Activated B cell treated with CpG ODN at 0.5 μM for 24 hours (primary cell): ENCODE measurements at regions of chr9 and their contacts with region 1.

Region 1: GRCh38 chr9:79883073-79883645 is 311.4 kb downstream of the TLE4 start:
- DNase-seq: peak; percentile 42
- ATAC-seq: peak; percentile 69
- H3K4me3 Mint-ChIP-seq: peak overlapping the region; percentile 72
- H3K27ac Mint-ChIP-seq: peak overlapping the region; percentile 69
- H3K4me1 Mint-ChIP-seq: peaks cover 75% of the 10 kb centered on the region
- H3K27me3 Mint-ChIP-seq: no peaks in the 10 kb centered on the region
- CTCF ChIP-seq: no peak

Region 2: GRCh38 chr9:79757881-79758669 is 125.1 kb before region 1 on chr9:
- CTCF ChIA-PET with region 1: no interaction called
- POLR2A ChIA-PET with region 1: no interaction called
- intact Hi-C with region 1: loop called (anchors 2 kb)
- DNase-seq: no peak
- ATAC-seq: no peak
- H3K4me3 Mint-ChIP-seq: no peak overlapping the region
- H3K27ac Mint-ChIP-seq: no peak overlapping the region
- H3K4me1 Mint-ChIP-seq: no peaks in the 10 kb centered on the region
- H3K27me3 Mint-ChIP-seq: no peaks in the 10 kb centered on the region
- CTCF ChIP-seq: no peak

Region 3: GRCh38 chr9:79895232-79895631 is 12.1 kb after region 1 on chr9:
- CTCF ChIA-PET with region 1: no interaction called
- POLR2A ChIA-PET with region 1: no interaction called
- intact Hi-C with region 1: loop called (anchors 1 kb)
- DNase-seq: no peak
- ATAC-seq: no peak
- H3K4me3 Mint-ChIP-seq: no peak overlapping the region
- H3K27ac Mint-ChIP-seq: no peak overlapping the region
- H3K4me1 Mint-ChIP-seq: no peaks in the 10 kb centered on the region
- H3K27me3 Mint-ChIP-seq: no peaks in the 10 kb centered on the region
- CTCF ChIP-seq: no peak

Region 4: GRCh38 chr9:80074439-80074838 is 191.3 kb after region 1 on chr9:
- CTCF ChIA-PET with region 1: no interaction called
- POLR2A ChIA-PET with region 1: interaction called, 8 read pairs
- intact Hi-C with region 1: loop called (anchors 5 kb)
- DNase-seq: no peak
- ATAC-seq: no peak
- H3K4me3 Mint-ChIP-seq: no peak overlapping the region
- H3K27ac Mint-ChIP-seq: no peak overlapping the region
- H3K4me1 Mint-ChIP-seq: peaks cover 33% of the 10 kb centered on the region
- H3K27me3 Mint-ChIP-seq: no peaks in the 10 kb centered on the region
- CTCF ChIP-seq: no peak

Region 5: GRCh38 chr9:80156756-80157472 is 273.8 kb after region 1 on chr9:
- CTCF ChIA-PET with region 1: no interaction called
- POLR2A ChIA-PET with region 1: no interaction called
- intact Hi-C with region 1: loop called (anchors 5 kb)
- DNase-seq: no peak
- ATAC-seq: peak; percentile 88
- H3K4me3 Mint-ChIP-seq: no peak overlapping the region
- H3K27ac Mint-ChIP-seq: peak overlapping the region; percentile 73
- H3K4me1 Mint-ChIP-seq: peaks cover 51% of the 10 kb centered on the region
- H3K27me3 Mint-ChIP-seq: no peaks in the 10 kb centered on the region
- CTCF ChIP-seq: no peak